HEK293 (cell line): ENCODE measurements at regions of chr4 and their contacts with region 1.

Region 1: GRCh38 chr4:13640149-13640940 is 12.8 kb upstream of the BOD1L1 start:
- H3K4me3 ChIP-seq: no peak overlapping the region
- H3K27ac ChIP-seq: peak overlapping the region; percentile 67
- H3K4me1 ChIP-seq: peaks cover 6% of the 10 kb centered on the region
- CTCF ChIP-seq: no peak

Region 2: GRCh38 chr4:13597604-13598003 is 42.7 kb before region 1 on chr4:
- CTCF ChIA-PET with region 1: no interaction called
- POLR2A ChIA-PET with region 1: no interaction called
- H3K4me3 ChIP-seq: no peak overlapping the region
- H3K27ac ChIP-seq: no peak overlapping the region
- H3K4me1 ChIP-seq: no peaks in the 10 kb centered on the region
- CTCF ChIP-seq: no peak

Region 3: GRCh38 chr4:13627606-13628301 is 12.6 kb before region 1 on chr4 and contains the start of gene BOD1L1:
- CTCF ChIA-PET with region 1: no interaction called
- POLR2A ChIA-PET with region 1: interaction called, 14 read pairs
- H3K4me3 ChIP-seq: peak within 1 kb of the TSS; percentile 88
- H3K27ac ChIP-seq: peak within 1 kb of the TSS; percentile 45
- H3K4me1 ChIP-seq: no peaks in the 10 kb centered on the region
- CTCF ChIP-seq: peak; percentile 93

Region 4: GRCh38 chr4:13654158-13654797 is 13.9 kb after region 1 on chr4:
- CTCF ChIA-PET with region 1: interaction called, 48 read pairs
- POLR2A ChIA-PET with region 1: no interaction called
- H3K4me3 ChIP-seq: peak overlapping the region; percentile 39
- H3K27ac ChIP-seq: no peak overlapping the region
- H3K4me1 ChIP-seq: no peaks in the 10 kb centered on the region
- CTCF ChIP-seq: peak; percentile 59